Activated CD4-positive, alpha-beta memory T cell treated with anti-CD3 and anti-CD28 coated beads for 36 hours (primary cell): ENCODE measurements at regions of chr2 and their contacts with region 1.

Region 1: GRCh38 chr2:200713003-200713703 is 98.6 kb upstream of the BZW1 start:
- DNase-seq: peak; percentile 96
- H3K4me3 Mint-ChIP-seq: peak overlapping the region; percentile 66
- H3K27ac Mint-ChIP-seq: peak overlapping the region; percentile 100
- H3K4me1 Mint-ChIP-seq: peaks cover 33% of the 10 kb centered on the region
- H3K27me3 Mint-ChIP-seq: peaks cover 5% of the 10 kb centered on the region

Region 2: DNA sequence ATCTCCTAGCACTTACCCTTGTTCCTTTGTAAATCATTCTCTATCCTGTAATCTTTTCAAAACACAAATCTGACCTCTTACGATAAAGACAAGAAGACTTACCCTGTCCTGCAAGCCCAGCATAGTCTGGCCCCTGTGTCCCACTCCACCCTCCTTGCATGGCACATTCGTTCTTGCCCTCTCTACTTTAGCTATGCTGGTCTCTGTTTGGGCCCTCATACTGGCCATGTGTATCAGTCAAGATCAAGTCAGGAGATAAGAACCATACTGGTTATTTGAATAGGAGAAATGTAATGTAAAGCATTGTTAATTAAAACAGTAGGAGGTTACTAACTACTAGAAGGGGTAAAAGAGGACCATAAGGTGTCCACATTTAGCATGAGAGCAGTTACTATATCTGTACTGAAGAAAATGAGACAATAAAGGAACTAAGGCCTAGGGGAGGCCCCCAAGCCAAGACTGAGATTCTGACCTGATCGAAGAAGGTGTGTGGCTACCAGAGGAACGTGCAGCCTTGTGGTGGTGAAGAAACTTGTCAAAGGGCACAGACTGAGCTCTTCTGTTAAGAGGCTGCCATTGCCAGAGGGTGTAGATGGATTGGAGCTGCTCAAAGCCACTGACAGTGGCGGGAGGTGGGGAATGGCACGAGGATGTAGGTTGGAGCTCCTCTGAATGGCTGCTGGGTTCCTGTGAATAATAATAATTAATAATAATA is 284.0 kb before region 1 on chr2:
- CTCF ChIA-PET with region 1: no interaction called
- POLR2A ChIA-PET with region 1: no interaction called
- intact Hi-C with region 1: no loop called
- DNase-seq: no peak
- H3K4me3 Mint-ChIP-seq: no peak overlapping the region
- H3K27ac Mint-ChIP-seq: no peak overlapping the region
- H3K4me1 Mint-ChIP-seq: peaks cover 10% of the 10 kb centered on the region
- H3K27me3 Mint-ChIP-seq: no peaks in the 10 kb centered on the region

Region 3: GRCh38 chr2:200687922-200688920 is 24.9 kb before region 1 on chr2:
- CTCF ChIA-PET with region 1: no interaction called
- POLR2A ChIA-PET with region 1: no interaction called
- intact Hi-C with region 1: loop called (anchors 1 kb)
- DNase-seq: no peak
- H3K4me3 Mint-ChIP-seq: no peak overlapping the region
- H3K27ac Mint-ChIP-seq: no peak overlapping the region
- H3K4me1 Mint-ChIP-seq: peaks cover 5% of the 10 kb centered on the region
- H3K27me3 Mint-ChIP-seq: peaks cover 8% of the 10 kb centered on the region

Region 4: DNA sequence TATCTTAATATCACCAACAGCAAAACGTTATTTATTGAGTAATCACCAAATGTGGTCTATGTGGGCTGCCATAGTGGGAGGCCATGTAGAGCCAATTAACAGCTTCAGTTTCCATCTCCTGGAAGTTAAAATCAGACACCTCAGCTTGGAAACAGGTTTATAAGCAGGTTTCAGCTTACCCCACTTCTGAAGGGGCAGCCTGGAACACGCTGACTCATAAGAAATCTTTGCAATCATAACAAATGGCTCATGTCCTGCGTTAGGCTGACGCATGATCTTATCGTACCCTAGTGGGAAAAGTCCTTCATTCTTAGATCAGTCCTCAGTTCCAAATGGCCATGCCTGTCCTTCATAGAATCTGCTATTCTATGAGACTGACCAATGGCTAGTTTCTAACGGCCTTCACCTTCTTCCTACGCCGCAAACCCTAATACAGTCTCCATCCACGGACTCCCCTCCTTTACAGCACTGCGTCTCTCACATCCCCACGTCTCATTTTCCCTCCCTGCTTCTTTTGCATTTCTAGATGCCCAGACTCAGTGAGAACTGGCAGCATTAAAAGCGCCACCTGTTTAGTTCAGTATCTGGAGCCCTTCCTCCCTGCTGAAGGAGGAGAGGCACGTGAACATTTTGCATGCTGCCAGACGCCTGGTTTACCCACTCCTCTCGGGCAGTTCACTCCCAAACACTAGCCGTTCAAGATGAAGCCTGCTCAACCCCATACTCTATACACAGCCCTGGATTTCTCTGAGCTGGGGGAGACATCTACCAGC is 74.4 kb after region 1 on chr2:
- CTCF ChIA-PET with region 1: no interaction called
- POLR2A ChIA-PET with region 1: no interaction called
- intact Hi-C with region 1: loop called (anchors 1 kb)
- DNase-seq: peak; percentile 52
- H3K4me3 Mint-ChIP-seq: no peak overlapping the region
- H3K27ac Mint-ChIP-seq: peak overlapping the region; percentile 26
- H3K4me1 Mint-ChIP-seq: peaks cover 16% of the 10 kb centered on the region
- H3K27me3 Mint-ChIP-seq: peaks cover 4% of the 10 kb centered on the region

Region 5: GRCh38 chr2:200888704-200889625 is 175.8 kb after region 1 on chr2 and contains the starts of genes NIF3L1 and PPIL3:
- CTCF ChIA-PET with region 1: interaction called, 4 read pairs
- POLR2A ChIA-PET with region 1: interaction called, 4 read pairs
- intact Hi-C with region 1: loop called (anchors 1 kb)
- DNase-seq: peak; percentile 99
- H3K4me3 Mint-ChIP-seq: peak within 1 kb of the TSS; percentile 98
- H3K27ac Mint-ChIP-seq: peak within 1 kb of the TSS; percentile 100
- H3K4me1 Mint-ChIP-seq: peaks cover 44% of the 10 kb centered on the region
- H3K27me3 Mint-ChIP-seq: no peaks in the 10 kb centered on the region
- total RNA-seq, gene NIF3L1: 30.8 to 32.7 TPM
- total RNA-seq, gene PPIL3: 84.0 to 87.9 TPM

Region 6: GRCh38 chr2:201118121-201118960 is 405.2 kb after region 1 on chr2:
- CTCF ChIA-PET with region 1: no interaction called
- POLR2A ChIA-PET with region 1: interaction called, 7 read pairs
- intact Hi-C with region 1: loop called (anchors 2 kb)
- DNase-seq: peak; percentile 93
- H3K4me3 Mint-ChIP-seq: peak overlapping the region; percentile 99
- H3K27ac Mint-ChIP-seq: peak overlapping the region; percentile 97
- H3K4me1 Mint-ChIP-seq: peaks cover 37% of the 10 kb centered on the region
- H3K27me3 Mint-ChIP-seq: no peaks in the 10 kb centered on the region